MCF 10A (cell line): ENCODE measurements at regions of chr5 and their contacts with region 1.

Region 1: GRCh38 chr5:142713121-142713706 is 27.3 kb upstream of the FGF1 start:
- DNase-seq: peak; percentile 95
- H3K4me3 Mint-ChIP-seq: peak overlapping the region; percentile 77
- H3K27ac Mint-ChIP-seq: peak overlapping the region; percentile 10
- H3K4me1 Mint-ChIP-seq: peaks cover 19% of the 10 kb centered on the region
- H3K27me3 Mint-ChIP-seq: no peaks in the 10 kb centered on the region
- CTCF ChIP-seq: peak; percentile 99

Region 2: GRCh38 chr5:142063878-142064331 is 649.3 kb before region 1 on chr5:
- CTCF ChIA-PET with region 1: no interaction called
- POLR2A ChIA-PET with region 1: no interaction called
- intact Hi-C with region 1: no loop called
- DNase-seq: no peak
- H3K4me3 Mint-ChIP-seq: no peak overlapping the region
- H3K27ac Mint-ChIP-seq: no peak overlapping the region
- H3K4me1 Mint-ChIP-seq: peaks cover 6% of the 10 kb centered on the region
- H3K27me3 Mint-ChIP-seq: peaks cover 16% of the 10 kb centered on the region
- CTCF ChIP-seq: no peak

Region 3: DNA sequence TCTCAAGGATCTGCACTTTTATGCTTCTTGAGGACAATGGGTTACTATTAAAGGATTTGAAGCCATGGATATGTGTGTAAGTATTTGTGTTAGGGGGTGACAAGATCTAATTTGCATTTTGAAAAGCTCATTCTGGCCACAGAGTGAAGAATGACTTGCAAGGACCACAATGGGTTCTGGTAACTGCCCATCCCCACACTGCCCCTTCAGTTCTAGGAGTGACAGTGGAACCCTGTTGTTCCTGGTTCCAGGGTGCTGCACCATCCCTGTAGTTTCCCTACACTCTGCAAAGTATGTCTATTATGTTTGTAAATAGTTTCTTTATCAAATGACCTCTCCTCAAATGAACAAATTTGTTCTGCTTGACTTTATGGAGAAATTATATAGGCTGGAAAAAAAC is 378.7 kb before region 1 on chr5:
- CTCF ChIA-PET with region 1: no interaction called
- POLR2A ChIA-PET with region 1: no interaction called
- intact Hi-C with region 1: no loop called
- DNase-seq: no peak
- H3K4me3 Mint-ChIP-seq: no peak overlapping the region
- H3K27ac Mint-ChIP-seq: no peak overlapping the region
- H3K4me1 Mint-ChIP-seq: no peaks in the 10 kb centered on the region
- H3K27me3 Mint-ChIP-seq: no peaks in the 10 kb centered on the region
- CTCF ChIP-seq: no peak

Region 4: GRCh38 chr5:142611154-142611553 is 102.1 kb before region 1 on chr5:
- CTCF ChIA-PET with region 1: interaction called, 31 read pairs
- POLR2A ChIA-PET with region 1: no interaction called
- intact Hi-C with region 1: loop called (anchors 1 kb)
- DNase-seq: peak; percentile 85
- H3K4me3 Mint-ChIP-seq: no peak overlapping the region
- H3K27ac Mint-ChIP-seq: peak overlapping the region; percentile 29
- H3K4me1 Mint-ChIP-seq: peaks cover 5% of the 10 kb centered on the region
- H3K27me3 Mint-ChIP-seq: no peaks in the 10 kb centered on the region
- CTCF ChIP-seq: peak; percentile 99

Region 5: DNA sequence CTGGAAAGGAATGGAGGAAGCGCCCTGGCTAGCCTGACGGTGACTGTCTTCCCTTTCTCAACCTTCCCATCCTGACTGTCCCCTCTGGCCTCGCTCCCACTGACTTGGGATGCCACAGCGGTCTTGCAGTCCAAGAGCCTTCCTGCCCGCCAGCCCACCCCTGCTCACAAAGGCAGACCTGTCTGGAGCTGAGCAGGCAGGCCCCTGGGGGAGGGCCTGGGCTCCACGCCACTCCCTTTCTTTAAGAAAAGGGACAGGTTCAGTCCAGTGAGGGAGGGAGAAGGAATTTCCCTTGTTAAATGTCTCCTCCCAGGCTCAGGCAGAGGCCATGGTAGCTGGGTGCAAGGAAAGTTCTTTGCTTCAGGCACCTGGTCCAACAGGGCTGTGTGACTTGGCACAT is 45.4 kb before region 1 on chr5:
- CTCF ChIA-PET with region 1: interaction called, 1,243 read pairs
- POLR2A ChIA-PET with region 1: no interaction called
- intact Hi-C with region 1: no loop called
- DNase-seq: no peak
- H3K4me3 Mint-ChIP-seq: no peak overlapping the region
- H3K27ac Mint-ChIP-seq: no peak overlapping the region
- H3K4me1 Mint-ChIP-seq: no peaks in the 10 kb centered on the region
- H3K27me3 Mint-ChIP-seq: no peaks in the 10 kb centered on the region
- CTCF ChIP-seq: no peak

Region 6: DNA sequence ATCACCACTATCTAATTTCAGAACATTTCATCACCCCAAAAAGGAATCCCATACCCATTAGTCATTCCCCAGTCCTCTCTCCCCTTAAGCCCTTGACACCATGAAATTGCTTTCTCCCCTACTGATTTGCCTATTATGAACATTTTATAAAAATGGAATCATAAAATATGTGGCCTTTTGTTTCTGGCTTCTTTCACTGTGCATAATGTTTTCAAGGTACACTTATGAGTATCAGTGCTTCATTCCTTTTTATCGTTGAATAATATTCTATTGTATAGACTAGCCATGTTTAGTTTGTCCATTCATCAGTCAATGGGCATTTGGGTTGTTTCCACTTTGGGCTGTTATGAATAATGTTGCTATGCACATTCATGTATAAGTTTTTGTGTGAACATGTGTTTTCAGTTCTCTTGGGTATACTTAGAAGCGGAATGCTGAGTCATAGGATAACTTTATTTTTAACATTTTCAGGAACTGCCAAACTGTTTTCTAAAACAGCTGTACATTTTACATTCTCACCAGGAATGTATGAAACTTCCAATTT is 13.0 kb after region 1 on chr5:
- CTCF ChIA-PET with region 1: interaction called, 56 read pairs
- POLR2A ChIA-PET with region 1: no interaction called
- intact Hi-C with region 1: no loop called
- DNase-seq: peak; percentile 93
- H3K4me3 Mint-ChIP-seq: no peak overlapping the region
- H3K27ac Mint-ChIP-seq: peak overlapping the region; percentile 86
- H3K4me1 Mint-ChIP-seq: peaks cover 28% of the 10 kb centered on the region
- H3K27me3 Mint-ChIP-seq: no peaks in the 10 kb centered on the region
- CTCF ChIP-seq: no peak

Region 7: GRCh38 chr5:142834504-142835203 is 121.4 kb after region 1 on chr5:
- CTCF ChIA-PET with region 1: interaction called, 10 read pairs
- POLR2A ChIA-PET with region 1: no interaction called
- intact Hi-C with region 1: no loop called
- DNase-seq: no peak
- H3K4me3 Mint-ChIP-seq: no peak overlapping the region
- H3K27ac Mint-ChIP-seq: no peak overlapping the region
- H3K4me1 Mint-ChIP-seq: peaks cover 16% of the 10 kb centered on the region
- H3K27me3 Mint-ChIP-seq: no peaks in the 10 kb centered on the region
- CTCF ChIP-seq: no peak

Region 8: GRCh38 chr5:142888469-142889085 is 175.4 kb after region 1 on chr5:
- CTCF ChIA-PET with region 1: interaction called, 1,942 read pairs
- POLR2A ChIA-PET with region 1: interaction called, 14 read pairs
- intact Hi-C with region 1: loop called (anchors 1 kb)
- DNase-seq: peak; percentile 83
- H3K4me3 Mint-ChIP-seq: no peak overlapping the region
- H3K27ac Mint-ChIP-seq: no peak overlapping the region
- H3K4me1 Mint-ChIP-seq: no peaks in the 10 kb centered on the region
- H3K27me3 Mint-ChIP-seq: no peaks in the 10 kb centered on the region
- CTCF ChIP-seq: peak; percentile 89

Region 9: GRCh38 chr5:143403593-143404415 is 690.6 kb after region 1 on chr5 and contains the start of gene NR3C1:
- CTCF ChIA-PET with region 1: no interaction called
- POLR2A ChIA-PET with region 1: no interaction called
- intact Hi-C with region 1: loop called (anchors 1 kb)
- DNase-seq: peak; percentile 86
- H3K4me3 Mint-ChIP-seq: peak within 1 kb of the TSS; percentile 98
- H3K27ac Mint-ChIP-seq: peak within 1 kb of the TSS; percentile 99
- H3K4me1 Mint-ChIP-seq: peaks cover 29% of the 10 kb centered on the region
- H3K27me3 Mint-ChIP-seq: no peaks in the 10 kb centered on the region
- CTCF ChIP-seq: peak; percentile 59
- total RNA-seq, gene NR3C1: 92.9 and 113 TPM in 2 replicates